HEK293T (cell line): ENCODE measurements at regions of chr22 and their contacts with region 1.

Region 1: GRCh38 chr22:21666786-21667185 is 974 bp downstream of the PPIL2 start:
- DNase-seq: no peak

Region 2: DNA sequence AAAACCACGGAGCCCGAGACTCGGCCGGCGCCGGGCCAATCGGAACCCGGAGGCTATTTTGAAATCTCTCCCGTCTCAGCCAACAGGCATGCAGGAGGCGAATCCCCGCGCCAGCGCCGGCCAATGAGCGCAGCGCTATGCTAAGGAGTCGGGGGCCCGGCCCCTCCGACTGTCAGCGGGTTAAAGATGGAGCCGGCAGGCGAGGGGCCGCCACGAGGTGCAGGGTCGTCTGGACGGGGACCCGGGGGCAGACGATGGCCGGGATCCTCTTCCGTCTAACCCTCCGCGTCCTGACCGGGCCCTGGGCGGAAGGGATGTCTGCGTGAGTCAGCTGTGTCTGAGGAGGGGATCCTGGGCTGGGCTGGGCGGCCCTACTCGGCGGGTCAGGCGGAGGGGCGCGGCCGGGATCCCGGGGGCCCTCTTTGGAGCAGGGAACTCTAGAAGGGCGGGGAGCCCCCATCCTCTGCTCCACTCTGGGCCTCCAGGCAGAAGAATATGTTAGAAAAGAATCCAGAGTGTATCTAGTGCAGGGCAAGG is 14.7 kb before region 1 on chr22:
- CTCF ChIA-PET with region 1: interaction called, 7 read pairs
- POLR2A ChIA-PET with region 1: interaction called, 19 read pairs
- DNase-seq: peak; percentile 93

Region 3: GRCh38 chr22:21778705-21779363 is 112.0 kb after region 1 on chr22:
- CTCF ChIA-PET with region 1: no interaction called
- POLR2A ChIA-PET with region 1: no interaction called
- DNase-seq: no peak

Region 4: GRCh38 chr22:21927174-21927823 is 260.5 kb after region 1 on chr22:
- CTCF ChIA-PET with region 1: no interaction called
- POLR2A ChIA-PET with region 1: no interaction called
- DNase-seq: no peak